Activated naive CD4-positive, alpha-beta T cell treated with anti-CD3 and anti-CD28 coated beads for 36 hours (primary cell): ENCODE measurements at regions of chr22 and their contacts with region 1.

Region 1: GRCh38 chr22:22565981-22566380 is 6.9 kb upstream of the PRAME start:
- DNase-seq: no peak
- H3K4me3 Mint-ChIP-seq: no peak overlapping the region
- H3K27ac Mint-ChIP-seq: no peak overlapping the region
- H3K4me1 Mint-ChIP-seq: no peaks in the 10 kb centered on the region
- H3K27me3 Mint-ChIP-seq: peaks cover 18% of the 10 kb centered on the region

Region 2: DNA sequence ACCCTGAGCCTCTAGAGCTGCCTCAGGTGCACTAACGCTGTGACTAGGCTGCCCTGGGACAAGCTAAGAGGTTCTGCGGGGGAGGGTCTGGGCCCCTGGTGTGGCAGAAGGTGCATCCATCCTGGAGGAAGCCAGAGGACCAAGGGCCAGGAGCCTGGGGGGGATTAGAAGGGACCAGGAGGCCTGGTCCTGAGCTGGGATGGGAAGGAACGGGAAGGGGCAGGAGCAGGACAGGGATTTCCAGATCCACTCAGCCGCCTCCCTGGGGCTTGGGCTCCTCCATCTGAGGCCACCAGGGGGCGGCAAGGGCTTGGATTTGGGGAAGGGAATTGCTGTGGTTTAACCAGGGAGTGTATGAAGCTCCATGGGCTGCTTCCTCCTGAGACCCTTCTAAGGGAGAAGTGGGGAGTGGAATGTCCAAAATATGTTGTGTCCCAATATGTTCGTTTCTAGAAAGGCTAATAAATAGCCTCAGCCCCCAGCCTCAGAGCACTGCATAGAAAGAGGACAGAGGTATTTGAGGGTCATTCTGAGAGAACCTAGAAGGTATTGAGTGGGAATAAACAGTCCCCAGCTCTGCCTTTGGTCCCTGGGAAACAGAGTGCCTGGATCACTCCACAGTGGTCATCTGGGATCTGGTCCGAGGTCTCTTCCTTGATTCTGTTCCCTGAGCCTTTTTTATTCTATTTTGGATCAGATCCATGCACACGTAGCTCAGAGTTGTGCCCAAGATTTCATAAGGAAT is 10.4 kb after region 1 on chr22:
- CTCF ChIA-PET with region 1: interaction called, 14 read pairs
- intact Hi-C with region 1: no loop called
- DNase-seq: peak; percentile 55
- H3K4me3 Mint-ChIP-seq: no peak overlapping the region
- H3K27ac Mint-ChIP-seq: no peak overlapping the region
- H3K4me1 Mint-ChIP-seq: no peaks in the 10 kb centered on the region
- H3K27me3 Mint-ChIP-seq: no peaks in the 10 kb centered on the region